ENCODE measurements at regions of chr6 and their contacts with region 1.

Region 1: DNA sequence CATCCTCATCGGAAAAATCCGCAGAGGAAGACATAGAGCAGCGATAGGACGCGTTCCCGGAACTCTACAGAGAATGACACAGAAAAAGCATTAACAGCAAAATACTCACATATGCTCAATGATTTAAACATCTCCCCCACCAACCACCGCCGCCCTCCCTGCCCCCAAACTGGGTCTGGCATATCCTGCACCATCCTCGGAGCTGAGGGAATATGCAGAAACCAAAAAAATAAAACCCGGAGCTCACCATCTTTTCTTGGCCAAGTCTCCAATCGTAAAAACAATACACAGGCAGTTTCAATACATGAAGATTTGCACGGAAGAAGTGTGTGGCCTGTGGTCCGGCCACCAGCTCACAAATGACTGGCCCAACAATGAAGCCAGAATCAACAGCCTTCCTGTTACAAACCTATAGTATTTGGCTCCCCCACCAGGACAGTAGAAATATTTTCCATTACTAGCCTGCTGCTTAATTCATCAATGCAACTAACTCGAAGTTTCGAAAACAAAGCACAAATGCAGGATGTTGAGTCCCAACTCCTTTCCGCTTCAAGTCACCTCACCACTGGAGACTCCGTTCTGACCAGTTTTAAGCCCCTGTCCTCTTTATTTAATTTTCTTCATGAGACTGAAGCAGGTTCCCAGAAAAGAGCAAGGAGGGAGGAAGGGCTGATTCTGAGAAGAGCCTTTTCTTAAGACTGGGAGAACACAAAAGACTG is 103.2 kb upstream of the BEND6 start:
- DNase-seq: peak; percentile 13 to 28
- H3K4me3 ChIP-seq: peak overlapping the region in 1 of 3 donors; percentile 10
- H3K27ac ChIP-seq: peak overlapping the region in 1 of 3 donors; percentile 23
- H3K4me1 ChIP-seq: no peaks in the 10 kb centered on the region
- H3K27me3 ChIP-seq: no peaks in the 10 kb centered on the region
- CTCF ChIP-seq: peak in 5 of 6 experiments; percentile 20 to 83 (median 60)
- POLR2A ChIP-seq: no peak

Region 2: DNA sequence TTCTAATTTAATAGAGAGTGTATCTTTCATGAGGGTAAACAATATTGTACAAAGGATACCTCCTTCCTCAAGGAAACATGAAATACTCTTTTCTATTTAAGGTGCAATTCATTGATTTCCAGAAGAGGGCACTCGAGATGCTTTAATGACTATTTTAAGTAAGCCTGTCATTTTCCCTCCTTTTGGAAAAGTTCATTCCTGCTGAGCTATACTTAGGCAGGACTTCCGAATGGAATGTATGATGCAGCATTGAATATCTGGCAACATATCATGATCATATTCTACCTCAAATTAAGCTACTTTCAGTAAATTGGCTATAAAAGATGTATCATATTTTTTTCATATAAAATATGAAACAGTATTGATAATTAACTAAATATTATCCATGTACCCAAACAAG is 214.1 kb before region 1 on chr6:
- intact Hi-C with region 1: loop called (anchors 5 kb)
- DNase-seq: no peak
- H3K4me3 ChIP-seq: no peak overlapping the region
- H3K27ac ChIP-seq: no peak overlapping the region
- H3K4me1 ChIP-seq: no peaks in the 10 kb centered on the region
- H3K27me3 ChIP-seq: no peaks in the 10 kb centered on the region
- CTCF ChIP-seq: peak in 5 of 6 experiments; percentile 12 to 64 (median 63)
- POLR2A ChIP-seq: no peak

Region 3: DNA sequence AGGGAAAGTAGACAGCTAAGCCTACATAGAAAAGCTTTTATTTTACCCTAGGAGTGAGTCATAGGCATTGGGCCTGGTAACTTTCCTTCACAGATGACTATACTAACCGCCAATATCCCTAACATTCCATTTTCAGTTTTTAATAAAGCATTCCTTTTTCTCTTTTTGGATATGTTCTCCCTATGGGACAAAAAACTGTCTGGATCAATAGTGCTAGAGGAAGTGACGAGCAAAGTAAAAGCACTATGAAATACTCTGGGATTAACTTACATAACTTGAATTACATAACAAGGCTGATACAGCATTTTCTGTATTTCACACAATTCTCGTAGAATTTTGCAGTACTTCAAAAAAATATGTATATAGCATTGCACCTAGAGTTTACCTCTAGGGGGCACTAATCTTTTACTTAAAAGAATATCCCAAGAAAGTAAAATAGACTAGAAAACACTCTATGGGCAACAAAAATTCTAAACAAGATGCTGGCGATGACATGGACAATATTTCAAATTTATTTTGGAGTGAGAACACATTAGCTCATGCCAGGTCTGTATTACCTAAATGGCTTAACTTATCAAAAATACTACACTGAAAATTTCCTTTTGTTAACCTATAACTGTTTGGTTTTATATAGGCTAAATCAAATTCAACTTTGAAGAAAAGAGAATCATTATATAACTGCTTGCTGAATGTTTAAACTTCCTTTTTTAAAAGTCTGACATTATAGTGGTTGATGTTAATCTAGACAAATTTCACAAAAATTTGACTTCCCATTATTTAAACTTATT is 142.7 kb before region 1 on chr6:
- intact Hi-C with region 1: loop called (anchors 5 kb)
- DNase-seq: no peak
- H3K4me3 ChIP-seq: no peak overlapping the region
- H3K27ac ChIP-seq: no peak overlapping the region
- H3K4me1 ChIP-seq: no peaks in the 10 kb centered on the region
- H3K27me3 ChIP-seq: no peaks in the 10 kb centered on the region
- CTCF ChIP-seq: peak; percentile 16 to 65 (median 47)
- POLR2A ChIP-seq: no peak

Region 4: DNA sequence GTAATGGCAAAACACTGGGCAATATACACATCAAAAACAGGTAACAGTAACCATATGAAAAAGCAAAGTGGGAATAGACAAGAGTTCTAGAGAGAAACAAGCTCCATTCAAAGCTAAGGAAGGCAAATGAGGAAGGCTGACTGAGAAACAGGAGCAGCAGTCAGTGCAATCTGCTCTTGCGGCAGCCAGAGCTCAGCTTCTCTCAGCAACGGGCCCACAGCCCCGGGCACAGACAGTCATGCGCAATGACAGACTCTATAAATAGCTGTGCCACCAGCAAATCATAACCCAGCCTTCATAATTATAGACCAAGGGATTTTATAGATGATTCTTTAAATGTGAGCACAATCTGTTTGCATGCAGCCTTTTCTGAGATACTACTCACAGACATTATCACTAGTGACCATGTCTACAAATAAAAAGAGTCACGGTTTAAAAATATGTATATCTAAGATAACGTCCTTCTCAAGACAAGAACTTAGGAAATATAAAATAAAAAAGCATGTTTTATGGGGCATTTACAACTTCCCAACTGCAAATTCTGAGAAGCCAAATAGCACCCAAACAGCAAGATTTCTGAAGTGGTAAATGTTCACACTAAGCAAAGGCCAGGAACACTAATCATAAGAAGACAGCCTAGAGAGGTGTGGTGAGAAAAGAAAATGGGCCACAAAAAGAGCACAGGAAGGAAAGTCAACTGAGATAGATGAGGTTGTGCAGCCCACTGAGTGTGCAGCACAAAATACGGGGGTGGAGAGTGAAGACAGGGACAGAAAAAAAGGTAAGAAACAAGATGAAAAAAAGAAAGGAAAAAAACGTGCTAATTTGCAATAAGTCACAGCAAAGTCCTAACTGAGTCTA is 63.3 kb after region 1 on chr6:
- intact Hi-C with region 1: no loop called
- DNase-seq: no peak
- H3K4me3 ChIP-seq: no peak overlapping the region
- H3K27ac ChIP-seq: no peak overlapping the region
- H3K4me1 ChIP-seq: no peaks in the 10 kb centered on the region
- H3K27me3 ChIP-seq: no peaks in the 10 kb centered on the region
- CTCF ChIP-seq: no peak
- POLR2A ChIP-seq: no peak

Region 5: GRCh38 chr6:57075092-57075491 is 223.4 kb after region 1 on chr6:
- intact Hi-C with region 1: no loop called
- DNase-seq: no peak
- H3K4me3 ChIP-seq: no peak overlapping the region
- H3K27ac ChIP-seq: no peak overlapping the region
- H3K4me1 ChIP-seq: no peaks in the 10 kb centered on the region
- H3K27me3 ChIP-seq: no peaks in the 10 kb centered on the region
- CTCF ChIP-seq: no peak
- POLR2A ChIP-seq: no peak